ENCODE measurements at regions of chr12 and their contacts with region 1.

Region 1: DNA sequence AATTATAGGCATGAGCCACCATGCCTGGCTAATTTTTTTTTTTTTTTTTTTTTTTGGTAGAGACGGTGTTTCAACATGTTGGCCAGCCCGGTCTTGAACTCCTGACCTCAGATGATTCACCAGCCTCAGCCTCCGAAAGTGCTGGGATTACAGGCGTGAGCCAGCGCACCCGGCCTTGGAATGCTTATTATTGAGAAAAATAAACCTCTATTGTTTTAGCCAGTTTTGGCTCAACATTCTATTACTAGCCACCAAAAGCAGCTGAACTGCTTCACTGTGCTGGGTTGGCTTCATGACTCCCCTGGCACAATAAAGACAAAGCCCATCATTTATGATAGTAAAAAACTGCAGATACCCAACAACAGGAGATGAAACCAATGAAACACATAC is 93.5 kb upstream of the CEP83 start:
- DNase-seq: peak; percentile 95
- H3K4me3 ChIP-seq: no peak overlapping the region
- H3K27ac ChIP-seq: peak overlapping the region; percentile 97
- H3K4me1 ChIP-seq: peaks cover 24% of the 10 kb centered on the region
- H3K27me3 ChIP-seq: no peaks in the 10 kb centered on the region
- CTCF ChIP-seq: no peak

Region 2: GRCh38 chr12:94507455-94507854 is 45.7 kb before region 1 on chr12:
- CTCF ChIA-PET with region 1: no interaction called
- dilution Hi-C with region 1: no loop called
- in situ Hi-C with region 1: no loop called
- intact Hi-C with region 1: no loop called
- DNase-seq: no peak
- H3K4me3 ChIP-seq: no peak overlapping the region
- H3K27ac ChIP-seq: no peak overlapping the region
- H3K4me1 ChIP-seq: peaks cover 5% of the 10 kb centered on the region
- H3K27me3 ChIP-seq: no peaks in the 10 kb centered on the region
- CTCF ChIP-seq: no peak

Region 3: DNA sequence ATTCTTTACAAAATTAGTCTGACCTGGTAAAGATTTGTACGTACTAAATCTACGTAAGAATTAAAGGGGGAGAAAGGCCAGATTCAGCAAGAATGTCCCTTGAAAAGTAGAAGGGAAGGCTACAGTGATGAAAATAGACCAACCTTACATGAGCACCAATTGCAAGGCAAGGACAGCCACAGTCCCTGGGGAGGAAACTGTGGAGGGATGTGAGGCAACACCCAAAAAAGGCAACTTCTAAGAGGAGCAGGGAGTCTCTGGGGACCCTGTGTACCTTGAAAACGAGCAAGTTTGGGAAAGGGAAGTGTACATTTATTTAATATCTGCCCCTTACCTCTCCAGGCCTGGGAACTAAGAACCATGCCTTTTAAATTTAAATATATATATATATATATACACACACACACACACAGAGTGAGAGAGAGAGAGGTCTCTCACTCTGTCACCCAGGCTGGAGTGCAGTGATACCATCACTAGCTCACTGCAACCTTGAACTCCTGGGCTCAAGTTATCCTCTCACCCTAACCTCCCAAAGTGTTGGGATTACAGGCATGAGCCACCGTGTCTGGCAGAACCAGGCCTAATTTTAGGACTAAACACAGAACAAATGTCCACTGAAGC is 40.8 kb after region 1 on chr12:
- CTCF ChIA-PET with region 1: no interaction called
- dilution Hi-C with region 1: no loop called
- in situ Hi-C with region 1: no loop called
- intact Hi-C with region 1: no loop called
- DNase-seq: no peak
- H3K4me3 ChIP-seq: no peak overlapping the region
- H3K27ac ChIP-seq: peak overlapping the region; percentile 9
- H3K4me1 ChIP-seq: peaks cover 72% of the 10 kb centered on the region
- H3K27me3 ChIP-seq: no peaks in the 10 kb centered on the region
- CTCF ChIP-seq: no peak

Region 4: DNA sequence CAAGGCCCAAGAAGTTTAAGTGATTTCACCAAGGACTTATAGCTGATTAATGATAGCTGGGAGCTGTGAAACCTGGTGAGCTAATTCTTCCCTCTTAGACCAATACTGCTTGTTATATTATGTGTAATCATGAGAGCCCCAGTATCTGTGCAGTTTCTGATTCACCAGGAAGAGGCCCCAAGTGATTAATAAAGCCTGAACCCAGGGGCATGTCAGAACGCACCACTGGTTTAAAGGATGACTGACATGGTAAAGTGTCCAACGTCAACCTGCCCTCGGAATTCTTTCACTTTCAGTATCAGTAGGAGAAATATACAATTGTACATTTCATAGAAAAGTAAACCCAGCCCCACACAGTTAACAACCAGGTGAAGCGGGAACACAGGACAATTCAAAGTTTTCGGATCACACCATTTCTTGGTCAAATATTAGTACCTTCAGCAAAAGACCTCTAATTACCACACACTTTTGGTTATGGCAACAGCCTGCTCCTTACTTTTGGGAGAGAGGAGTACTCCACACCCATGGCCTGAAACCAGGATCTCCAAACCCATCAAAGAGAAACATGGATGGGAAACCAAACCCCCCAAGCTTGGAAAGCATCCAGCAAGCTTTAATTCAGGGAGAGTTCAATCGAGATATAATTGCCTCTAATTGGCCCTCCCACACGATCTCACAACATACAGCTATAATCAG is 68.7 kb after region 1 on chr12:
- CTCF ChIA-PET with region 1: no interaction called
- dilution Hi-C with region 1: loop called (anchors 5 kb)
- in situ Hi-C with region 1: no loop called
- intact Hi-C with region 1: loop called (anchors 1 kb)
- DNase-seq: peak; percentile 99
- H3K4me3 ChIP-seq: peak overlapping the region; percentile 38 to 46 (median 44)
- H3K27ac ChIP-seq: peak overlapping the region; percentile 100
- H3K4me1 ChIP-seq: peaks cover 62% of the 10 kb centered on the region
- H3K27me3 ChIP-seq: no peaks in the 10 kb centered on the region
- CTCF ChIP-seq: no peak

Region 5: DNA sequence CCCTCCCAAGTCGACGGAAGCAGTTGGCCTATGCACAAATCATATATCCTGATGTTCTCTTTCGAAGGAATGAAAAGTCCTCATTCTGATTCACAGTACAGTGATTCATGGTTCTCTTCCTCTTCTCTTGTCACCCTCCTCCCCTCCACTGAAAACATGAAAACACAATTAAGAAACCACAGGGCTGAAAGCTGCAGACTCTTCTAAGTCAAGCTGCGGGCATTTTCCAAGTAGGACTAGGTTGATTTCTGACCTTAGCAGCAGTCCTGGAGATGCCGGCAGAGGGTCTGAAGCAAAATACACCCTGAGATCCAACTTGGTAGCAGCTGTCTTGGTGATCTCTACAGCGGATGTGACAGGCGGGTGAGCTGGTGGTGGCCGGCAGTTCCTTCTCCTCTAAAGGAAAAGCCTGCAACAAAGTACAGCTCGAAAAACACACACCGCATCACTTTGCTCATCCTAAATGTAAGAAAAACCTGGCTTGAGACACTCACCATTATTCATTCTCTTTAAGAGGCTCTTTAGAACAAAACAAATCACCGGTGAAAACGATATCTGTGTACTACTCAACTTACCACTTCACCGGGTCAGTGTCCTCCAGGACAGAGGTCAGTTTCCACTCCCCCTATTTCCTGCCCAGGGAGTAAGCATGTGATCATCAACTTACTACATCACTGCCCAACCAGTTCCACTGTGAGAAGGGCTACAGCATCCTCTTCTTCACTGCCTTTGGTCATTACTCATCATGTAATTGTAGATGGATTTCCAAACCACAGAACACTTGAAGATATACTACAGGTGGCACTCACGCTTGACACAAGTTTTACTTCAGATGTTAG is 91.2 kb after region 1 on chr12:
- CTCF ChIA-PET with region 1: no interaction called
- dilution Hi-C with region 1: no loop called
- in situ Hi-C with region 1: no loop called
- intact Hi-C with region 1: loop called (anchors 2 kb)
- DNase-seq: peak; percentile 95
- H3K4me3 ChIP-seq: no peak overlapping the region
- H3K27ac ChIP-seq: peak overlapping the region; percentile 76
- H3K4me1 ChIP-seq: peaks cover 58% of the 10 kb centered on the region
- H3K27me3 ChIP-seq: no peaks in the 10 kb centered on the region
- CTCF ChIP-seq: no peak

Region 6: DNA sequence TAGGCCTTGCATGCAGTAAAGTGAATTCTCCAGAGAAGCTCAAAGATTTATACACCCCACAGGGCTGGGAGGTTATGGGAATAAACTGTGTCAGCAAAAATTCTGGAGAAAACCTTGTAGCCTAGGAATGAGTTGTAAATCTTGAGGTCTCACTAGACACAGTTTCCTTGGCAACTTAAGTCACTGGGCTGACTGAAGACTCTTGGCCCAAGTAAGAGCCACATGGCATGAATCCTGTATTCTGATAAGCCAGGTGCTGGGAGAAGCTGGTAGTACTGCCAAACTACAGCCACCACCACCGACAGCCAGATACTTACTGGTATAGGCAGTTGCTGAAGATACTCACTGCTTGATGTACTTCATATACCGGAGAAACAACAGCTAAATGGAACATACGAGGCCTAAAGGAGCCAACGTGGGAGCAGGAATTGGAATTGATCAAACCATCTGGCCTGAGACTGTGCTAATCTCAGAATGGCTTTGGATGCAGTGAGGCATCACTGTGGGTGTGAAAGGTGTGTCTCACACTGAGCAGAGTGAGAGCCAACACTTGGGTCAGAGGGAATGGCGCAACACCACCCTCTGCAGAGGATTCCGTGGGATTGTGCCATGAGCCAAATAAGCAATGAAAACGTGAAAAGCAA is 200.0 kb after region 1 on chr12:
- CTCF ChIA-PET with region 1: no interaction called
- dilution Hi-C with region 1: loop called (anchors 25 kb)
- in situ Hi-C with region 1: loop called in 1 of 2 experiments (anchors 10 kb)
- intact Hi-C with region 1: no loop called
- DNase-seq: peak; percentile 70
- H3K4me3 ChIP-seq: no peak overlapping the region
- H3K27ac ChIP-seq: no peak overlapping the region
- H3K4me1 ChIP-seq: no peaks in the 10 kb centered on the region
- H3K27me3 ChIP-seq: no peaks in the 10 kb centered on the region
- CTCF ChIP-seq: peak; percentile 7 to 44

Measured in mammary epithelial cell (primary cell).